ENCODE measurements at regions of chr4 and their contacts with region 1.

Region 1: DNA sequence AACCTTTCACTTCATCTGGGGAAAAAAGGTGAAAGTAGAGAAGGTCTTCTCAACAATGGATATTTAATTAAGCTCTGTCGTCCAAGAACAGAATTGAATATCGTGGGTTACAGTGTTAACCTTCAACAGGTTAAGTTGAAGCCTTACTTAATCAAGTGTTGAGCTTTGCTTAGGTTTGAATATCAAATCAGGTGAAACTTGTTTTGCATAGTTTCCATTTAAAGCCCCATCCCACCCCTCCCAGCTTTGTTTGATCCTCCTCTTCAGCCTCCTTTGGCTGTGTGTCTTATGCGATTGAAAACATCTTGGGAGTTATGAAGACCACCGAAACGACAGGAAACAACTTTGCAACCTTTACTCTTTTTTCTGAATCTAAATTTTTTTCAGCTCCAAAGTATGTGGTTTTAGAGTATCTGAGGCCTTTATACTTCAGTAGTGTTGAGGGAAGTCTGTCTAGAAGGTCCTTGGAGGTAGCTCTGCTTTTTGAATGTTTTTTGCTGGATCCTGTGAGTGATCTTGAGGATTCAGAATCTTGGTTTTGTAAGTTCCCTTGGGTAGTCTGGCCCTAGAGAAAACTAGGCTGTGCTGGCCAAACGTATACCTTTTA is 39.1 kb downstream of the MCUB start:
- DNase-seq: no peak
- ATAC-seq: peak; percentile 66
- H3K4me3 ChIP-seq: no peak overlapping the region
- H3K4me3 Mint-ChIP-seq: peak overlapping the region; percentile 64
- H3K27ac ChIP-seq: no peak overlapping the region
- H3K27ac Mint-ChIP-seq: peak overlapping the region; percentile 77
- H3K4me1 ChIP-seq: peaks cover 10% of the 10 kb centered on the region
- H3K4me1 Mint-ChIP-seq: peaks cover 59% of the 10 kb centered on the region
- H3K27me3 ChIP-seq: no peaks in the 10 kb centered on the region
- H3K27me3 Mint-ChIP-seq: no peaks in the 10 kb centered on the region
- CTCF ChIP-seq: no peak

Region 2: GRCh38 chr4:108849611-108850168 is 749.5 kb before region 1 on chr4:
- CTCF ChIA-PET with region 1: no interaction called
- POLR2A ChIA-PET with region 1: no interaction called
- intact Hi-C with region 1: no loop called
- DNase-seq: peak in 5 of 14 experiments; percentile 6 to 40 (median 7)
- ATAC-seq: no peak
- H3K4me3 ChIP-seq: no peak overlapping the region
- H3K4me3 Mint-ChIP-seq: no peak overlapping the region
- H3K27ac ChIP-seq: no peak overlapping the region
- H3K27ac Mint-ChIP-seq: no peak overlapping the region
- H3K4me1 ChIP-seq: no peaks in the 10 kb centered on the region
- H3K4me1 Mint-ChIP-seq: peaks cover 33% of the 10 kb centered on the region
- H3K27me3 ChIP-seq: no peaks in the 10 kb centered on the region
- H3K27me3 Mint-ChIP-seq: no peaks in the 10 kb centered on the region
- CTCF ChIP-seq: no peak

Region 3: GRCh38 chr4:109588176-109588575 is 11.0 kb before region 1 on chr4:
- CTCF ChIA-PET with region 1: no interaction called
- POLR2A ChIA-PET with region 1: interaction called, 10 read pairs
- intact Hi-C with region 1: loop called in 1 of 2 experiments (anchors 2 kb)
- DNase-seq: peak in 10 of 14 experiments; percentile 5 to 62 (median 16)
- ATAC-seq: peak; percentile 86
- H3K4me3 ChIP-seq: no peak overlapping the region
- H3K4me3 Mint-ChIP-seq: peak overlapping the region; percentile 30
- H3K27ac ChIP-seq: no peak overlapping the region
- H3K27ac Mint-ChIP-seq: peak overlapping the region; percentile 67
- H3K4me1 ChIP-seq: peaks cover 17% of the 10 kb centered on the region
- H3K4me1 Mint-ChIP-seq: peaks cover 84% of the 10 kb centered on the region
- H3K27me3 ChIP-seq: no peaks in the 10 kb centered on the region
- H3K27me3 Mint-ChIP-seq: no peaks in the 10 kb centered on the region
- CTCF ChIP-seq: no peak

Region 4: DNA sequence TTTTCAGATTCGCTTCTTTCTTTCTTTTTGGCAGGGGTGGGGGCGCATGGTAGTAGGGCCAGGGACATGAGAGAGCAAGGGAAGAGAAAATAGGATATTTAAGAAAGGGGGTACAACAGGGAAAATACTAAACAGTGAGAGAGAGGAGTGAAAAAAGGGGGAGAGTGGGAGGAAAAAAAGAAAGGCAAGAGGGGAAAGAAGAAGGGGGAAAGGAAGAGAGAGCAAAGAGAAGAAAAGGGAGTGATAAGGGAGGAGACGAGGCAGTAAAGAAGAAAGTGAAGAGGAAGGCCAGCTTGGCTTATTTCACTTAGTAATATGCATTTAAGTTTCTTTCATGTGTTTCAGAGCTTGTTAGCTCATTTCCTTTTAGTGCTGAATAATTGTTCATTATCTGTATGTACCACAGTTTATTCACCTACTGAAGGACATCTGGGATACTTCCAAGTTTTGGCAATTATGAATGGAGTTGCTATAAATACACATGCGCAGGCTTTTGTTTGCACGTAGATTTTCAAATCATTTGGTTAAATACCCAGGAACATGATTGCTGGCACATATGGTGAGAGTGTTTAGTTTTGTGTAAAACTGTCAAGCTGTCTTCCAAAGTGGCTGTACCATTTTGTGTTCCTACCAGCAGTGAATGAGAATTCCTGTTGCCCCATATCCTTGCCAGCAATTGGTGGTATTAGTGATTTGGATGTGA is 66.8 kb after region 1 on chr4:
- CTCF ChIA-PET with region 1: no interaction called
- POLR2A ChIA-PET with region 1: no interaction called
- intact Hi-C with region 1: loop called in 1 of 2 experiments (anchors 5 kb)
- DNase-seq: no peak
- ATAC-seq: no peak
- H3K4me3 ChIP-seq: no peak overlapping the region
- H3K4me3 Mint-ChIP-seq: peak overlapping the region; percentile 4
- H3K27ac ChIP-seq: no peak overlapping the region
- H3K27ac Mint-ChIP-seq: peak overlapping the region; percentile 4
- H3K4me1 ChIP-seq: peaks cover 4% of the 10 kb centered on the region
- H3K4me1 Mint-ChIP-seq: peaks cover 78% of the 10 kb centered on the region
- H3K27me3 ChIP-seq: no peaks in the 10 kb centered on the region
- H3K27me3 Mint-ChIP-seq: no peaks in the 10 kb centered on the region
- CTCF ChIP-seq: no peak

Region 5: GRCh38 chr4:110270492-110271197 is 671.5 kb after region 1 on chr4:
- CTCF ChIA-PET with region 1: no interaction called
- POLR2A ChIA-PET with region 1: no interaction called
- intact Hi-C with region 1: no loop called
- DNase-seq: no peak
- ATAC-seq: no peak
- H3K4me3 ChIP-seq: no peak overlapping the region
- H3K4me3 Mint-ChIP-seq: no peak overlapping the region
- H3K27ac ChIP-seq: no peak overlapping the region
- H3K27ac Mint-ChIP-seq: no peak overlapping the region
- H3K4me1 ChIP-seq: no peaks in the 10 kb centered on the region
- H3K4me1 Mint-ChIP-seq: no peaks in the 10 kb centered on the region
- H3K27me3 ChIP-seq: no peaks in the 10 kb centered on the region
- H3K27me3 Mint-ChIP-seq: peaks cover 7% of the 10 kb centered on the region
- CTCF ChIP-seq: no peak

Measured in CD4-positive, alpha-beta T cell (primary cell).